PC-9 (cell line): ENCODE measurements at regions of chr19 and their contacts with region 1.

Region 1: DNA sequence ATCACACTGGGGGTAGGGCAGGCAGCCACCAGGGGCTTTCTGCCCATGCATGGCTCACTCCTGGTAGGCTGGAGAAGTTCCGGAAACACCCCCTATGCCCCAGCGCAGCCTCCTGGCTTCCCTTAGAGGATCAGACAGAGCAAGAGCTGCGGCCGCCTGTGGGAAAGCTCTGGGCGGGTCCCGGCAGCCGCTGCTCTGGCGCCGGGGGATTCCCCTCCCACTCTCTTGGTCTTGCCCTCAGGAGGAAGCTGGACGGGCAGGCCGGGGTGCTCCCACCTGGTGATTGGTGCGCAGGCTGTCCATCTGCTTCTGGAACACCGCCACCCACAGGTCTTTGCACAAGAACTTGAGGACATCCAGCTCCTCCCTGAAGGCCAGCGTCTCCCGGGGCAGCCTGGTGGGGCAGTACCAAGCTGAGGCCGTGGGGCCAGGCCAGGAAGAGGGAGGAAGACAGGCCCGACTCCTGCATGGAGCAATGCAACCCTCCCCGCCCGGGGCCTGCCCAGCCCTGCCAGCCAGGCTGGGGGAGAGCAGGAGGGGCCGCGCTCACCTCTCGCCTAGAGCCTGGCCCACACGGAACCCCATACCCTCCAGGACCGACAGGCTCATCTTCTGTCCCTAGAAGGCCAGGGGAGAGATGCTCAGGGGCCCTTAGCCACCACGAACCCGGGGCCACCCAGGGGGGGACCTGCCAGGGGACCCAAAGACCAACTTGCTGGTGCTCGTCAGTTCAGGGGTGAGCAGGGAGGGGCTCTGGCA is 4.0 kb upstream of the NKPD1 start:
- DNase-seq: peak; percentile 82 to 84
- H3K4me3 ChIP-seq: no peak overlapping the region
- H3K27ac ChIP-seq: no peak overlapping the region
- H3K4me1 ChIP-seq: peaks cover 18% of the 10 kb centered on the region
- H3K27me3 ChIP-seq: no peaks in the 10 kb centered on the region
- CTCF ChIP-seq: no peak; the same call in 1 of the 2 replicates

Region 2: GRCh38 chr19:45038931-45039893 is 125.5 kb before region 1 on chr19 and contains the start of gene CLASRP:
- CTCF ChIA-PET with region 1: no interaction called
- POLR2A ChIA-PET with region 1: interaction called, 10 read pairs
- intact Hi-C with region 1: no loop called
- DNase-seq: peak; percentile 77 to 90
- H3K4me3 ChIP-seq: peak within 1 kb of the TSS; percentile 100
- H3K27ac ChIP-seq: peak within 1 kb of the TSS; percentile 81
- H3K4me1 ChIP-seq: peaks cover 12% of the 10 kb centered on the region
- H3K27me3 ChIP-seq: no peaks in the 10 kb centered on the region
- CTCF ChIP-seq: no peak
- total RNA-seq, gene CLASRP: 74.1 and 76.8 TPM in 2 replicates

Region 3: DNA sequence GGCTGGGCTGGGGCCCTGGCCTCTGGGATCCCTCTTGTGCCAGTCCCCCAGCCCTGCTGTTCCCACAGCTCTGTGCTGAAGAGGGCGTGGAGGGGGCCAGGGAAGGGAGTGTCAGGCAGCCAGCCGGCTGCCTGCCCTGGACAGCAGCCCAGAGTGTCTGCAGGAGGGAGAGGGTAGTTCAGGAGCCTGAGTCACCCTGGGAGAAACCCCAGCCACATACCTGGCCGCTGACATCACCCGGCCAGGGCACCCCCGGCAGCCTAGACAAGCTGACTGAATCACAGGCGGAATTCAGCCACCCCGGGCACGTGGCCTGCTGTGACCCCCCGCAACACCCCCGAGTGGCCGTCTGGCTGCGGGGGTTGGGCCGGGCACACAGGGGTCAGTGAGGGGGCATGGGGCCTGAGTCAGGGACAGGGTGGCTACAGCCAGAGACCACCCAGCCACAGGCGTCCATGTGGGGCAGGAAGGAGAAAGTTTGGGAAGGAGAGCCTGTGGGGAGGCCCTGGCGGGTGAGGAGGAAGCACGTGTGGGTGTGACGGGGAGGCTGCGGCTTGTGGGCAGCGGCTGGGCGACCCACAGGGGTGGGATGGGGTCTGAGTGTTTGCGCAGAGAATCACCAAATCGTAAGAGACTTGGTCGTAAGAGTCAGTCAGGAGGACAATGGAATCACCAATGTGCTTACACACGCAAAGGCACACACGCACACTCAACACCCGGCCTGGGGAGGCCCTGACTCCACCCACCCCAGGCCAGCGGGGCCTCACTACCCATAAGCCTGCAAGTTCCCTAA is 291.1 kb after region 1 on chr19:
- CTCF ChIA-PET with region 1: no interaction called
- POLR2A ChIA-PET with region 1: no interaction called
- intact Hi-C with region 1: no loop called
- DNase-seq: peak; percentile 98
- H3K4me3 ChIP-seq: peak overlapping the region; percentile 53; the same call in 1 of the 2 replicates
- H3K27ac ChIP-seq: peak overlapping the region; percentile 93
- H3K4me1 ChIP-seq: peaks cover 38% of the 10 kb centered on the region
- H3K27me3 ChIP-seq: no peaks in the 10 kb centered on the region
- CTCF ChIP-seq: no peak